Right ventricle myocardium inferior (tissue), 1 donor: ENCODE measurements at regions of chr4 and their contacts with region 1.

Region 1: DNA sequence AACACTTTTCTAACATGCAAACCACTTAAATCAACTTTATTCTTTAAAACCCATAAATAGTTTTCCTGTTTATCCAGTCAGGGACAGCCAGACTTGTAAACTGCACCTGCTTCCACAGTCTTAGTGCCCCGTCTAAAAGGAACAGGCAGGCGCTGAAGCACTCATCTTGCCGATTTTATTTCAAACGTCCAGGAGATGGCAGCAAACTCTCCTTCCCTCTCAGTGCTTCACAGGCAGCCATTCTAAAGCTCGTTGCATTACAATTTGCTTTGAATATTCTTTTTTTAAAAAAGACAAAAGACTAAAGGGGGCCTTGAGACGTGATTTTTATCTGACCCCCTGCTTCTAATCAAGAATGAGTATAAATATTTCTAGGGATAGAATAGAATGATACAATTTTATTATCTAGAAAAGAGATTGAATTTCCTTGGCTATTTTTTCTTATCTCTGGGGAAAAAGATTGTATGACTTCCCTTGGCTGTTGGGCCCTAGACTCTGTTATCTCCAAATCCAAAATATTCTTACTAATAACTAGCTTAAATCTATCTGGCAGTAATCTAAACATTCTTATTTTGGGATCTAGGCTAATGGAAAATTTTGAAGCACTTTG is 93.6 kb upstream of the MYOZ2 start:
- DNase-seq: no peak
- ATAC-seq: peak; percentile 62

Region 2: DNA sequence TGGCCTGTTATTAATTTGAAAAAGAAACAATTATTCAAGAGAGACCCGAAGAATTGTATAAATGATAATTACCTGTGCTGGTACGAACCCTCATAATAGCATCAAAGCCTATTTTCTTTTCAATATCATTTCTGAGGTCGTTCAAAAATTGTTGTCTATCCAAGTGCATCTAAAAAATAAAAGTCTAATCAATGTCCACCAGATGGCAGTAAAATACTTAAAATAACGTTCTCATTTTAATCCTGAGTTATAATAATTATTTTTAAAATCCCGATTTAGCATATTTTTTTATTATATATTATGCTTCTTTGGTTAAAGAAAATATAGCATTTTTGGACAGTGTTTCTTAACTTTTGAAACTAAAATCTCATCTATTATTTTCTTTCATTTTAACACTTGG is 301.2 kb before region 1 on chr4:
- intact Hi-C with region 1: loop called (anchors 5 kb)
- DNase-seq: no peak
- ATAC-seq: no peak

Region 3: DNA sequence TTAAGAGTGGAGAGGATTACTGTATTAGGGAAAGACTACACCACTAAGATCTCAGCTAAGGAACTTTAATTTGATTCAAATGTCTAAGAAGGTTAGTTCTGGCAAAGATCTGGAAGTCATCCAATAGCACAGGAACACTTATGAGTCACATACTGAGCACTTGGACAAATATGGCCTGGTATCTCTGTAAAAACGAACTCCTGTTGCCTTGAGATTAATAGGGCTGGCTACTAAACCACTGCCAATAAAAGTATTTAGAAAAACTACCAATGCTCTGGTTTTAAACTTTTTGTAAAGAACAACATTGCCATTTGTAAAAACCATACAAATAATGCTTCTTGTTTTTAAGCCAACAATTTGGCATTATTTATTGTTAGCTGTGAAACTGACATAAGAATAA is 276.7 kb before region 1 on chr4:
- intact Hi-C with region 1: loop called (anchors 10 kb)
- DNase-seq: no peak
- ATAC-seq: peak; percentile 87

Region 4: GRCh38 chr4:118981839-118982381 is 60.1 kb before region 1 on chr4:
- intact Hi-C with region 1: loop called (anchors 5 kb)
- DNase-seq: peak; percentile 48
- ATAC-seq: peak; percentile 78

Region 5: GRCh38 chr4:119128148-119128547 is 86.1 kb after region 1 on chr4:
- intact Hi-C with region 1: loop called (anchors 2 kb)
- DNase-seq: no peak
- ATAC-seq: peak; percentile 69

Region 6: DNA sequence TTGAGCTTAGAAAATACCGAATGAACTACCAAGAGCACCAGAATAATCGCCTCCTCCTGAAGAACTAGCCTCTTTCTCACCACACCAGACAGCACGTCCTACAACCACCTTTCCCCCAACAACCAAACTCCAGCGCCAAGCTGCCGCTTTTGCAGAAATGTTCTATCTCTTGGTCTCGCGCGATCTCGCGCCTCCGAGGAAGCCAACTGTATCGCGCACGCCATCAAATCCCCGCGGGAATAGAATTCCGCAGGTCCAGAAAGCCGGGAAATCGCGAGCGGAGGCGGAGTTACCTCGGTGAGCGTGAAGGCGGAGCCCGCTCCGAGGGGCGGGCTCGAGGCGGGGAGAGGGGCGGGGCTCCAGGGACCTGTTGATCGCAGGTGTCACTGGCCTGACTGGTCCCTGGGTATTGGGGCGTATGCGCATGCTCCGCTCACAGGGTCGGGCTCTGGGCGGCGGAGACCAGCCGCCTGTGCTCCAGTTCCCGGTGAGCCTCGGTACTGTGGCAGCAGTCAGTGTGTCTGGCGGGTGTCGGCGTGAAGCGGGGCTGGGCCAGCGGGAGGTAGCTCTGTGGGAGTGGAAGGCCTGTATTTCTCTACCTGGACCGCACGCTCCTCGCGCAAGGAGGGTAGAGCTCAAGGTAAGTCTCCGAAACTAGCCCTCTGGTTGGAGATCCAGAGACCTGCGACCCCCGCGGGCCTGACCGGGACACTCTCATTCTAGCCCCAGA is 170.3 kb after region 1 on chr4 and contains the start of gene USP53:
- intact Hi-C with region 1: loop called (anchors 2 kb)
- DNase-seq: peak; percentile 97
- ATAC-seq: peak; percentile 97
- total RNA-seq, gene USP53: 32.8 TPM

Region 7: DNA sequence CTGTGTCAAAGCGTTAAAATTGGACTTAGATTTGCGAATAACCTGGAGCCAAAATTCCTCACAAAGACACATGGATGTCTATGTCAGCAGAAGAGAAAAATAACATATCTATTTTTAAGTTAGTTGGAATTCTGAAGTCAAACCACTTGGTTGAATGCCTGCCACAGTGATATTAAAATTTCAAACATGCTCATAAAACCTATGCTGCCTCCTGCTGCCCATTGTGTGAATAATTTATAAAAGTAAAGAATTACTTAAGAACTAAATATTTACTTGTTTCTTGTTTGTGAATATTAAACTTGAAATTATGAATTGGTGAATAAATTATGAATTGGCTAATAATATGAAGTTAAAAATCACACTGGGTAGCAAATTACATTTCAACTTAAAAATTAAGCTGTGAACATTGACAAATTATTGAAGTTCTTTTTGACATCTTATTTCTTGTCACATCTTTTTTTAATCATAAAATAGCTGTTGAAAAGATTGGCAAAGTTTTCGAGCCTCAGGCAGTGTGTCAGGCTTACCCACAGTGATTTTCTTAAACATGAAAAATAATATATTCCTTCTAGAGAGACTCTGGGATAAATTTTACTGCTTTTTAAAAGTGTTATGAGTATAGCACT is 244.4 kb after region 1 on chr4:
- intact Hi-C with region 1: loop called (anchors 5 kb)
- DNase-seq: no peak
- ATAC-seq: peak; percentile 48